Heart right ventricle (tissue), 16 donors: ENCODE measurements at regions of chr9 and their contacts with region 1.

Region 1: GRCh38 chr9:33272061-33272460 is 7.2 kb downstream of the CHMP5 start:
- DNase-seq: no peak
- ATAC-seq: no peak
- H3K4me3 ChIP-seq: no peak overlapping the region
- H3K27ac ChIP-seq: no peak overlapping the region
- H3K4me1 ChIP-seq: peaks cover 0 to 6% (median 0%) of the 10 kb centered on the region in 9 donors
- H3K27me3 ChIP-seq: no peaks in the 10 kb centered on the region
- CTCF ChIP-seq: no peak

Region 2: GRCh38 chr9:33330005-33330404 is 57.9 kb after region 1 on chr9:
- intact Hi-C with region 1: loop called in 1 of 10 experiments (anchors 10 kb)
- DNase-seq: no peak
- ATAC-seq: no peak
- H3K4me3 ChIP-seq: no peak overlapping the region
- H3K27ac ChIP-seq: peak overlapping the region in 9 of 10 donors; percentile 30 to 81 (median 70)
- H3K4me1 ChIP-seq: peaks cover 0 to 21% (median 10%) of the 10 kb centered on the region in 9 donors
- H3K27me3 ChIP-seq: no peaks in the 10 kb centered on the region
- CTCF ChIP-seq: no peak

Region 3: DNA sequence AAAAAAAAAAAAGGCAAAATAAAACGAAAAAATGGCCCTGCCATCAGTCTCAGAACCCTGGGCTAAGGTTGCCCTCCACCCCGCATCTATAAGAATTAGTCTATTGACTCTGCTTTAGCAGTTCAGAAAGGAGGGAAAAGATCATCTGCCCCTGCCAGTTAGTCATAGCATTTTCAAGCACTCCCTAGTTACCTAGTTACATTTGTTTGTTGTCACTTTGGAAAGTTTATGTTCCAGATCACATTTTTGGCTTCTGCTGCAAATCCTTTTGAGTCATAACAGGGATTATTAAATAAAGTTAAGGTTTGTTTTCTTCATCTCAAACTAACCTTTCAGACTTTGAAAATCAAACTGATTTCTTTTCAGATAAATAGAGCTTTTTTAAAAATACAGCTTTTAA is 78.2 kb after region 1 on chr9:
- intact Hi-C with region 1: loop called in 1 of 10 experiments (anchors 10 kb)
- DNase-seq: no peak
- ATAC-seq: peak in 6 of 8 donors; percentile 27 to 81 (median 54)
- H3K4me3 ChIP-seq: no peak overlapping the region
- H3K27ac ChIP-seq: peak overlapping the region in 6 of 10 donors; percentile 34 to 56 (median 42)
- H3K4me1 ChIP-seq: peaks cover 0 to 34% (median 13%) of the 10 kb centered on the region in 9 donors
- H3K27me3 ChIP-seq: no peaks in the 10 kb centered on the region
- CTCF ChIP-seq: no peak

Region 4: DNA sequence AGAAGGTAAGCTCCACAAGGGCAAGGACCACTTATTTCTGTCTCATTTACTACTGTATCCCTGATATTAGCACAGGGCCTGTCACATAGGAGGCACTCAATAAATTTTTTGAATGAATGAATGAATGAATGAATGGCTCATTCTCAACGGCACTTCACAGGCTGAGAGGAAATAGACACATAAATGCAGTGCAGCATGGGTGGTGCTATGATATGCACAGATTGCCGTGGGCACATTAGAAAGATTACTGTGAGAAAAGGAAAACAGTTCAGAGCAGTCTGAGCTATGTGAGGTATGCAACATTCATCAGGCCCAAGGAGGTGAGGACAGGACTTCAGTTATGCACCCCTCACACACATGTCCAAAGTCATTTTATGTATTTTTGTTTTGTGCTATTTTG is 208.0 kb after region 1 on chr9:
- intact Hi-C with region 1: no loop called
- DNase-seq: no peak
- ATAC-seq: no peak
- H3K4me3 ChIP-seq: no peak overlapping the region
- H3K27ac ChIP-seq: no peak overlapping the region
- H3K4me1 ChIP-seq: peaks cover 0 to 2% (median 0%) of the 10 kb centered on the region in 9 donors
- H3K27me3 ChIP-seq: no peaks in the 10 kb centered on the region
- CTCF ChIP-seq: no peak